OCI-LY7 (cell line): ENCODE measurements at regions of chr2 and their contacts with region 1.

Region 1: DNA sequence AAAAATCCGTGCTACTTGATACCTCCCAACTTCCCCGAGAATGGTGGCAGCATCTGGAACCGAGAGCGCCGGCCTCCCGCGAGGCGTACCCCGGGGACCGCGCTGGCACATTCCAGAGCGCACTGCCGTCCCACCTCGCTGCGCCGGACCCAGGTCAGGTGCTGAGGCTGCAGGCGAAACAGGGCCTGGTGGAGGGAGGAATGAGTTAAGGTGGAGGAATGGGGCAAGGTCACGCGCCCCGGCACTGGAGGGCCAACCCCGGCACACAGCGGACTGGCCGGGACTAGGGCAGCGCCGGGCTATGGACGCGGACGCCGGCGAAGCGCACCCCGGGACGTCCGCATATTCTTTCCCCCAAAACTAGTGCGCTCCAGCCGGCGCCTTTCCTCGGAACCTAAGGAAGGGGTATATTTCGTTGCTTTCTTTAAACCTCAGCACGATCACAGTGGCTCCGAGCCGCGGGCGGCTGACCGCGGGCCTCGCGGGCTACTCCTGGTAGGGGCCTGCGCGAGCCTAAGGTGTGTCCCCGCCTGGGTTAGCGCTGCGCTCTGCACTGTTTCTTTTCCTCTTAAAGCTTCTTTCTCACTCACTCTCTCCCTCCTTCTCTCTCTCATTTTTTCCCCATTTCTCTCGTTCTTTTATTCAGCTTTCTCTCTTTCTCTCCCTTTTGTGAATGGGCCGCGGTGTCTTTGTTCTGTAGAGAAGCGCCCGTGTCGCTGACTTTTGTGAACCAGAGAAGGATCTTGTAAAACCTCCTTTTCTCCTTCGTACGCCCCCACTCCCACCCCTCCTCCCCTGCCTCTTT is 2.1 kb upstream of the OTX1 start:
- DNase-seq: no peak
- H3K4me3 ChIP-seq: no peak overlapping the region
- H3K27ac ChIP-seq: no peak overlapping the region
- H3K4me1 ChIP-seq: peaks cover 5% of the 10 kb centered on the region
- CTCF ChIP-seq: no peak

Region 2: GRCh38 chr2:63078852-63079606 is 30.5 kb after region 1 on chr2:
- CTCF ChIA-PET with region 1: no interaction called
- POLR2A ChIA-PET with region 1: interaction called, 12 read pairs
- intact Hi-C with region 1: no loop called
- DNase-seq: peak; percentile 16
- H3K4me3 ChIP-seq: no peak overlapping the region
- H3K27ac ChIP-seq: no peak overlapping the region
- H3K4me1 ChIP-seq: no peaks in the 10 kb centered on the region
- CTCF ChIP-seq: peak; percentile 74